Panc1 (cell line): ENCODE measurements at regions of chr3 and their contacts with region 1.

Region 1: GRCh38 chr3:128969993-128970739 is 23.7 kb downstream of the CFAP92 start:
- DNase-seq: peak; percentile 39
- ATAC-seq: peak; percentile 67
- H3K4me3 ChIP-seq: no peak overlapping the region
- H3K27ac ChIP-seq: no peak overlapping the region
- H3K4me1 ChIP-seq: no peaks in the 10 kb centered on the region
- H3K27me3 ChIP-seq: no peaks in the 10 kb centered on the region
- CTCF ChIP-seq: peak; percentile 98

Region 2: GRCh38 chr3:128547368-128547987 is 422.7 kb before region 1 on chr3:
- CTCF ChIA-PET with region 1: no interaction called
- POLR2A ChIA-PET with region 1: no interaction called
- in situ Hi-C with region 1: no loop called
- intact Hi-C with region 1: no loop called
- DNase-seq: no peak
- ATAC-seq: peak; percentile 54
- H3K4me3 ChIP-seq: no peak overlapping the region
- H3K27ac ChIP-seq: no peak overlapping the region
- H3K4me1 ChIP-seq: no peaks in the 10 kb centered on the region
- H3K27me3 ChIP-seq: no peaks in the 10 kb centered on the region
- CTCF ChIP-seq: no peak

Region 3: GRCh38 chr3:128629936-128630335 is 340.2 kb before region 1 on chr3:
- CTCF ChIA-PET with region 1: no interaction called
- POLR2A ChIA-PET with region 1: no interaction called
- in situ Hi-C with region 1: no loop called
- intact Hi-C with region 1: no loop called
- DNase-seq: no peak
- ATAC-seq: no peak
- H3K4me3 ChIP-seq: no peak overlapping the region
- H3K27ac ChIP-seq: no peak overlapping the region
- H3K4me1 ChIP-seq: no peaks in the 10 kb centered on the region
- H3K27me3 ChIP-seq: no peaks in the 10 kb centered on the region
- CTCF ChIP-seq: no peak

Region 4: DNA sequence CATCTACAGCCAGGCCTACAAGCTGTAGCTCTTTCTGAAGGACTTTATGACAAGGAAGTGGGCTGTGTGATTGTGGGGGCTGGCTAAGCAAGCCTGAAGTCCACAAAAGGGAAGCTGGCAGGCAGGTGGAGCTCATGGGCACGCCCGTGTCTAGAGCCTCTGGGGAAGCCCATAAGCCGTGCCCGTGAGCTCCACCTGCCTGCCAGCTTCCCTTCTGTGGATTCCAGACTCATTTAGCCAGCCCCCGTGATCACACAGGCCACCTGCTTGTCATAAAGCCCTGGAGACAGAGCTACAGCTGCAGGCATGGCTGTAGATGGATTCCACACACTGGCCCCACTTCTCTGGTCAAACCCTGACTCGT is 46.2 kb after region 1 on chr3:
- CTCF ChIA-PET with region 1: interaction called, 22 read pairs
- POLR2A ChIA-PET with region 1: no interaction called
- in situ Hi-C with region 1: no loop called
- intact Hi-C with region 1: no loop called
- DNase-seq: no peak
- ATAC-seq: peak; percentile 38; the same call in 1 of the 2 replicates
- H3K4me3 ChIP-seq: no peak overlapping the region
- H3K27ac ChIP-seq: no peak overlapping the region; the same call in 1 of the 2 replicates
- H3K4me1 ChIP-seq: no peaks in the 10 kb centered on the region
- H3K27me3 ChIP-seq: no peaks in the 10 kb centered on the region
- CTCF ChIP-seq: no peak

Region 5: DNA sequence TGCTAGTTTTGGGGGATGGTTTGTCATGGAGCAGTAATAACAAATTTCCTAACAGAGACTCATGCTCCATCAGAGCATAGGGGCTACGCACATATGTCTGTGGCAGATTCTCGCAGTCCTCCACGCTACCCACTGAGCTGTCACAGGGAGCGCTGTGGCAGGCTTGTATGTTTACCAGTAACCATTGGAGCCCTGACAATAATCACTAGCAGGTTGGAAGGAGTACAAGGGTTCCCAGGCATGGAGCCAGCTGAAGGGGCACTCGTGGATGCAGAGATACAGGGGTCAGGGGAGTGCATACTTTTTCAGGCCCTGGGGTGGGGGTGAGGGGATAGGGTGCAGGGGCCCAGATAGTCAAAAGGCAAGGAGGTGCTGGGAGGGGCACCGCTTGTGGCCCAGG is 82.5 kb after region 1 on chr3:
- CTCF ChIA-PET with region 1: interaction called, 23 read pairs
- POLR2A ChIA-PET with region 1: no interaction called
- in situ Hi-C with region 1: no loop called
- intact Hi-C with region 1: no loop called
- DNase-seq: no peak
- ATAC-seq: no peak
- H3K4me3 ChIP-seq: no peak overlapping the region
- H3K27ac ChIP-seq: no peak overlapping the region
- H3K4me1 ChIP-seq: peaks cover 33% of the 10 kb centered on the region
- H3K27me3 ChIP-seq: no peaks in the 10 kb centered on the region
- CTCF ChIP-seq: no peak

Region 6: DNA sequence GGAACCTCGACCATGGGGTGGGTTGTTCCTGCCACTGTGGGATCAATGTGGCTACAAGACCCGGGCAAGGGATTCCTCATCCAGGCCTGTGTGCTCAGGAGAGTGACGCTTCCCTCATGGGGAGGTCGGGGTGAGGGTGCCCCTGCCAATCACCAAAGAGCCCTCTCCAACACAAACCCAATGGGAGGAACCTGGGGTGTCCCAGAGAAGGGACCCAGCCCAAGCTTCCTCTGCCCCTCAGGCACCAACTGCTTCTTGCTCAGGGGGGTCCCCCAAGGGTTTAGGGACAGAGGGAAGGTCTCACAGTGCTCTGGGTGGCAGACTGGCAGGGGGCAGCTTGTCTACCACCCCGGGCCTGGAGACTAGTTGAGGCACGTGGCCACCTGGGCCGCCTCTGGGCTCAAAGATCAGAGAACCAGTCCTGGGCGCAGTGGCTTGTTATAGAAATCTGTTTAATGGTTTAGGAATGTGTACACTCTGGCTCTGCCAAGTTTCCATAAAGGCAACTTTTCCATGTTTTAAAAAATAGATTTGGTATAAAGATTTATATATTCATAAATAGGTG is 117.1 kb after region 1 on chr3:
- CTCF ChIA-PET with region 1: no interaction called
- POLR2A ChIA-PET with region 1: no interaction called
- in situ Hi-C with region 1: no loop called
- intact Hi-C with region 1: loop called (anchors 10 kb)
- DNase-seq: no peak
- ATAC-seq: no peak
- H3K4me3 ChIP-seq: no peak overlapping the region
- H3K27ac ChIP-seq: 0 out of 2 replicates have a peak overlapping the region, but pooled peaks have one; percentile 12
- H3K4me1 ChIP-seq: peaks cover 4% of the 10 kb centered on the region
- H3K27me3 ChIP-seq: no peaks in the 10 kb centered on the region
- CTCF ChIP-seq: no peak

Region 7: GRCh38 chr3:129120254-129121004 is 150.3 kb after region 1 on chr3:
- CTCF ChIA-PET with region 1: interaction called, 11 read pairs
- POLR2A ChIA-PET with region 1: no interaction called
- in situ Hi-C with region 1: no loop called
- intact Hi-C with region 1: no loop called
- DNase-seq: peak; percentile 28
- ATAC-seq: peak; percentile 53
- H3K4me3 ChIP-seq: peak overlapping the region; percentile 76 to 81
- H3K27ac ChIP-seq: peak overlapping the region; percentile 91
- H3K4me1 ChIP-seq: peaks cover 39% of the 10 kb centered on the region
- H3K27me3 ChIP-seq: no peaks in the 10 kb centered on the region
- CTCF ChIP-seq: no peak